ENCODE measurements at regions of chr6 and their contacts with region 1.

Region 1: DNA sequence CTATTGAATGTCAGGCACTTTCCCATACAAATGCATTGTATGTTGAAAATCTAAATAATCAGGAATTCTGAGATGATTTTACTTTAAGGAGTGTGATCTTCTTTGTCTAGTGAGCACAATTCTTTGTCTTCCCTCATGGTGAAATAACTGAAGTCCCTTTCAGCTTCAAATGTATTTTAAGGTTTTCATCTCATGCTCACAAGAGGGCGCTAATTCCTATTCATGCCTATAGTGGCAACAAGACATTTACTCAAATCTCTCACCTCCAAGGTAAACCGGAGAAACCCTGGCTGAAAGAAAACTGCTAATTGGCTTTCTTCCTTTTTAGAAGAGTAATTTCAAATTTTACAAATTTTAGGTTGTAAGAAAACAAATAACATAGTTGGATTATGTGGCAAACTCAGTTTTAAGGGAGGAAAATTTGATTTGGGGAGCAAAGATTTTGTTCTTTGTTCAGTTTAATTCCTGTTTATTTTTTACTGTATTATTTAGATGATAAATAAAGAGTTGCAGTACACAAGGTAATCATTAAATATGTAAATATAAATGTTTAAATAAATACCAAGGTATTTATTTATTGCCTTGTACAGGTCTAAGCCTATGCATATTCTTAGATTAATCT is 69.1 kb downstream of the SLC35F1 start:
- DNase-seq: peak; percentile 48
- H3K4me3 ChIP-seq: no peak overlapping the region
- H3K27ac ChIP-seq: no peak overlapping the region
- H3K4me1 ChIP-seq: no peaks in the 10 kb centered on the region
- H3K27me3 ChIP-seq: no peaks in the 10 kb centered on the region
- CTCF ChIP-seq: peak; percentile 33 to 52
- POLR2A ChIP-seq: no peak

Region 2: DNA sequence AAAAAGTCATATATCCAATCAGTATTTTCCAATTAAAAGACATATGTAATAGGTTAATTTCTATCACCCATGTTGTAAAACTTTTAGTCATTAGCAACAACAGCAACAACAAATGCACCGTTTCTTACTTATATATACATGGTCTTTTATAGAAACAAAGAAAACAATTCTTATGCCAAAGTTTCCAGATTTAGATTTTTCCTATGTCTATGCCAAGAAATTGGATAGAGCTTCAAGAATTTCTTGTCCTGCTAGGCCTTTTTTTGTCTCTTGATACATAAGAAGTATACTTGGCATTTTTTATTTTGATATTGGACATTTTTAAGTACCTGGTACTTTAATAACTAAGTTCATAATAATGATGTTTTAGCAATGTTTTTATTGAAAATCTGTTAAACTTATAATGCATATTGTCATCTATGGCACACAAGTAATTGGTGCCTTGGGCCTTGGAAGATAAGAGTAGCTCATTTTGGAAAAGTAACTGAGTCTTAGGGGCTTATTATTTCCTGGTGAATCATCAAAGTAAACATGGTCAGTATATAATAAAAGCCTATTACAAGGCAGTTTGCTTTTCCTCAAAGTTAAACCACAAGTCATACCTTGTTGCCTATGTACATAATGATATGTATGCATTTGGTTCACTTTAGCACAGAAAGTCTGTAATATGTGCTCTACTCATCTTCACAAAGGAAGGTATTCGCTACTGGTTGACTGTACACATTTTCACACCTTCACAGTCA is 1905.4 kb before region 1 on chr6:
- CTCF ChIA-PET with region 1: no interaction called
- POLR2A ChIA-PET with region 1: no interaction called
- dilution Hi-C with region 1: no loop called
- intact Hi-C with region 1: no loop called
- DNase-seq: no peak
- H3K4me3 ChIP-seq: no peak overlapping the region
- H3K27ac ChIP-seq: no peak overlapping the region
- H3K4me1 ChIP-seq: no peaks in the 10 kb centered on the region
- H3K27me3 ChIP-seq: peaks cover 0 to 2% of the 10 kb centered on the region in 2 experiments
- CTCF ChIP-seq: no peak
- POLR2A ChIP-seq: no peak

Region 3: DNA sequence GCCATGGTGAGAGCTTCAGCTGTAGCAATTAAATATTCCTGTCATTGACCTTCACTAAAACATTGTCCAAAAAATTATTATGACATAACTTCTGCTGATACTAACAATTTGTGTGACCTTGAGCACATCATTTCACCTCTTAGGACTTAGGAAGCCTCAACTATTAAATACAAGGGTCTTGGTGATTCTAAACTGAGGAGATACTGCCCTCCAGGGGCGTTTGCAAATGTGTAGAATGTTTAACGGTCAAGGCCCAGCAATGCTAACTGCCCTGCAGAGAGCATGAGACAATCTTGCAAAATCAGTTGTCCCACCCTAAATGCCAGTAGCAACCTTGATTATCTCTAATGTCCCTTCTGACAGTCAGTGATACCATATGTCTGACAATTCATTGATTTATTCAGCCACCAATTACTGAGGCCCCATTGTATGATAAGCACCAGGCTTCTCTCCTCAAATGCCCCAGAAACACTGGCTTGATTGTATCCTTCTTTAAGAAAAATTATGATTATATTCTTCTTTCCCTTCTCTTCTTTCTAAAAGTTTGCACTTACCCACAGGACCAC is 287.9 kb after region 1 on chr6:
- CTCF ChIA-PET with region 1: interaction called, 17 read pairs
- POLR2A ChIA-PET with region 1: no interaction called
- dilution Hi-C with region 1: no loop called
- intact Hi-C with region 1: loop called (anchors 1 kb)
- DNase-seq: peak; percentile 12
- H3K4me3 ChIP-seq: no peak overlapping the region
- H3K27ac ChIP-seq: no peak overlapping the region
- H3K4me1 ChIP-seq: no peaks in the 10 kb centered on the region
- H3K27me3 ChIP-seq: no peaks in the 10 kb centered on the region
- CTCF ChIP-seq: no peak
- POLR2A ChIP-seq: no peak

Region 4: GRCh38 chr6:118325220-118325860 is 349.2 kb after region 1 on chr6:
- CTCF ChIA-PET with region 1: no interaction called
- POLR2A ChIA-PET with region 1: no interaction called
- dilution Hi-C with region 1: no loop called
- intact Hi-C with region 1: no loop called
- DNase-seq: no peak
- H3K4me3 ChIP-seq: no peak overlapping the region
- H3K27ac ChIP-seq: no peak overlapping the region
- H3K4me1 ChIP-seq: no peaks in the 10 kb centered on the region
- H3K27me3 ChIP-seq: no peaks in the 10 kb centered on the region
- CTCF ChIP-seq: no peak
- POLR2A ChIP-seq: no peak

Region 5: DNA sequence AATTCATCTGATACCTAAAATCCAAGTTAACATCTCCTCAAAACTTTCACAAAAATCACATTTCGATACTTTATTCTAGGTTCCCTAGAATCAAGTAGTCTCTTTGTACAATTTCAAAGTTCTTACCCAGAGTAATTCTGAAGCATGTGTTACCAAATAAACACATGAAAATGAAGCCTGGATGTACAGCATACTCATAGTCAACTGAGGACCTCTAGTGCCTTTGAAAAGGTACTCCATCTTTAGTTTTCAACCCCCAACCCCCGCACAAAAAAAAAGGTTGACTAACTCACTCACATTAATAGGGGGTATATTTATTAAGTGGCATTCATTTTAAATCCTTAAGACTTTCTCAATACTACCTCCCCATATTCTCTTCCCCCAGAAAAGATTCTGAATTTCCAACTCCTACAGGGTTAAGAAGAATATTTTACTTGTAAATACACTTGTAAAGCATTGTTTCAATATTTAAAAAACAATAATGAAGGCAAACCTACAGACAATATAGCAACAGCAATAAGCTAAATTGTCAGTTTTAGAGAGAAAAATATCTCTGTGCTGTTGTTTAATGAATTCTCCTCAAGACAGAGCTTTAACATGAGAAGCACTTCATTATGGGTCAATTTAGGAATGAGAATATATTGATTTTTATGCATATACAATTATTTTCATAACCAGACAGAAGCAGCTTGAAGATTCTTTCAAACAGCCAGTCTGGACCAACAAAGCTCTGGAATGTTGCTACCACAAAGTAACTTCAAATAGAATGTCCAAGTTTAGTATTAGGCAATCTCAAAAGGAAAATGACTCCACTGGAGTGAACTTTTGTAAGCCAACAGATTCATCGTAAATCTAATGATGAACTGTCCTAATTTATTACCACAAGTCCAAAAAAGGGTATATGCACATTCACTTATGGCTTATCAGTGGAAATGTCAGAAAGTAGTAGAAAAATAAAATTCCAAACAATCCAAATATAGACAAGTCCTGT is 575.2 kb after region 1 on chr6:
- CTCF ChIA-PET with region 1: interaction called, 3 read pairs
- POLR2A ChIA-PET with region 1: no interaction called
- dilution Hi-C with region 1: no loop called
- intact Hi-C with region 1: loop called (anchors 1 kb)
- DNase-seq: peak; percentile 79
- H3K4me3 ChIP-seq: no peak overlapping the region
- H3K27ac ChIP-seq: no peak overlapping the region
- H3K4me1 ChIP-seq: no peaks in the 10 kb centered on the region
- H3K27me3 ChIP-seq: no peaks in the 10 kb centered on the region
- CTCF ChIP-seq: peak; percentile 31 to 46
- POLR2A ChIP-seq: no peak

Region 6: GRCh38 chr6:118618679-118619377 is 642.7 kb after region 1 on chr6:
- CTCF ChIA-PET with region 1: interaction called, 3 read pairs
- POLR2A ChIA-PET with region 1: no interaction called
- dilution Hi-C with region 1: no loop called
- intact Hi-C with region 1: loop called (anchors 1 kb)
- DNase-seq: peak; percentile 54
- H3K4me3 ChIP-seq: no peak overlapping the region
- H3K27ac ChIP-seq: no peak overlapping the region
- H3K4me1 ChIP-seq: no peaks in the 10 kb centered on the region
- H3K27me3 ChIP-seq: no peaks in the 10 kb centered on the region
- CTCF ChIP-seq: peak; percentile 78 to 82
- POLR2A ChIP-seq: no peak